CD14-positive monocyte (primary cell): ENCODE measurements at regions of chr15 and their contacts with region 1.

Region 1: DNA sequence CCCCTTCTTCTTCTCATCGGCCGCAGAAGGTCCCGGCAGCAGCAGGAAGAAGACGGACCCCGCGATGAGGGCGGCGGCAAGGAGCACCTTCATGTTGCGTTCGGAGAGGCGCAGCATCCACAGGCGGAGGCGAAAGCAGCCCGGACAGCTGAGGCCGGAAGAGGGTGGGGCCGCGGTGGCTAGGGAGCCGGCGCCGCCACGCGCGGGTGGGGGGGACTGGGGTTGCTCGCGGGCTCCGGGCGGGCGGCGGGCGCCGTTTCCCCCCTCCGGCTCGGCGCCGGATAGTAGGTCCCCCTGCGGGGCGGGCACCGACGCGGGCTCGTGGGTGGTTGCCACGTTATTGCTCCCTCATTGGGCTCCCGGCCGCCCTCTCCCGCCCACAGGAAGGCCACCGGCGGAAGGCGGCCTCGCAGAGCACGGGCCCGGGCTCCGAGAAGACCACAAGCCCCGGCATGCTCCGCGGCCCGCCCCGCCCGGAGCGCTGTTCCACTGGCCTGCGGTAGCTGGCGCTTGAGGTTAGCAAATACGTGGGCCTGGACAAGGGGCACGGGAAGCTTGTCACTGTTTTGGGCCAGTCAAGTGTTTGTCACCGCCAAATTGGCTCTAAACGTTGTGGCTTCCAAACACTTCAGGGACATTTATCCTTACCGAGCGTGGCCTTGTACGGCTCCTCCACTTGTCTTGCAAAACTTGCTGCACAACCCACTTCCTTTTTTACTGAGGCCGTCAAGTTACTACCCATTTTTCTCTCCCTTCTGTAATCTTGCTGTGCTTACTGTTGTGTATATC is at the start of gene PPIB:
- DNase-seq: peak; percentile 93 to 96 (median 95)
- H3K4me3 ChIP-seq: peak within 1 kb of the TSS; percentile 73 to 92 (median 85)
- H3K4me3 Mint-ChIP-seq: peak within 1 kb of the TSS; percentile 96
- H3K27ac ChIP-seq: peak within 1 kb of the TSS; percentile 89 to 94
- H3K27ac Mint-ChIP-seq: peak within 1 kb of the TSS; percentile 93 to 96 (median 95)
- H3K4me1 ChIP-seq: peaks cover 29 to 37% of the 10 kb centered on the region in 2 donors
- H3K4me1 Mint-ChIP-seq: peaks cover 41% of the 10 kb centered on the region
- H3K27me3 ChIP-seq: no peaks in the 10 kb centered on the region
- H3K27me3 Mint-ChIP-seq: peaks cover 0 to 2% (median 0%) of the 10 kb centered on the region in 3 donors
- CTCF ChIP-seq: no peak
- polyA plus RNA-seq, gene PPIB: 224 to 532 (median 520) TPM

Region 2: GRCh38 chr15:64093627-64094417 is 69.2 kb before region 1 on chr15 and contains the start of gene CIAO2A:
- intact Hi-C with region 1: loop called (anchors 2 to 5 kb)
- DNase-seq: peak; percentile 98 to 99 (median 99)
- H3K4me3 ChIP-seq: peak within 1 kb of the TSS; percentile 52 to 90 (median 84)
- H3K4me3 Mint-ChIP-seq: peak within 1 kb of the TSS; percentile 97 to 99
- H3K27ac ChIP-seq: peak within 1 kb of the TSS; percentile 87 to 95
- H3K27ac Mint-ChIP-seq: peak within 1 kb of the TSS; percentile 97 to 100 (median 99)
- H3K4me1 ChIP-seq: peaks cover 80 to 91% of the 10 kb centered on the region in 2 donors
- H3K4me1 Mint-ChIP-seq: peaks cover 71% of the 10 kb centered on the region
- H3K27me3 ChIP-seq: no peaks in the 10 kb centered on the region
- H3K27me3 Mint-ChIP-seq: no peaks in the 10 kb centered on the region
- CTCF ChIP-seq: no peak
- polyA plus RNA-seq, gene CIAO2A: 98.2 to 265 (median 261) TPM

Region 3: GRCh38 chr15:64112904-64113303 is 50.2 kb before region 1 on chr15:
- intact Hi-C with region 1: no loop called
- DNase-seq: peak; percentile 38 to 75 (median 55)
- H3K4me3 ChIP-seq: peak overlapping the region in 1 of 3 experiments; percentile 44
- H3K4me3 Mint-ChIP-seq: peak overlapping the region in 1 of 2 donors; percentile 75
- H3K27ac ChIP-seq: peak overlapping the region; percentile 62 to 90
- H3K27ac Mint-ChIP-seq: peak overlapping the region; percentile 81 to 94 (median 90)
- H3K4me1 ChIP-seq: peaks cover 38 to 45% of the 10 kb centered on the region in 2 donors
- H3K4me1 Mint-ChIP-seq: peaks cover 54% of the 10 kb centered on the region
- H3K27me3 ChIP-seq: no peaks in the 10 kb centered on the region
- H3K27me3 Mint-ChIP-seq: no peaks in the 10 kb centered on the region
- CTCF ChIP-seq: no peak

Region 4: DNA sequence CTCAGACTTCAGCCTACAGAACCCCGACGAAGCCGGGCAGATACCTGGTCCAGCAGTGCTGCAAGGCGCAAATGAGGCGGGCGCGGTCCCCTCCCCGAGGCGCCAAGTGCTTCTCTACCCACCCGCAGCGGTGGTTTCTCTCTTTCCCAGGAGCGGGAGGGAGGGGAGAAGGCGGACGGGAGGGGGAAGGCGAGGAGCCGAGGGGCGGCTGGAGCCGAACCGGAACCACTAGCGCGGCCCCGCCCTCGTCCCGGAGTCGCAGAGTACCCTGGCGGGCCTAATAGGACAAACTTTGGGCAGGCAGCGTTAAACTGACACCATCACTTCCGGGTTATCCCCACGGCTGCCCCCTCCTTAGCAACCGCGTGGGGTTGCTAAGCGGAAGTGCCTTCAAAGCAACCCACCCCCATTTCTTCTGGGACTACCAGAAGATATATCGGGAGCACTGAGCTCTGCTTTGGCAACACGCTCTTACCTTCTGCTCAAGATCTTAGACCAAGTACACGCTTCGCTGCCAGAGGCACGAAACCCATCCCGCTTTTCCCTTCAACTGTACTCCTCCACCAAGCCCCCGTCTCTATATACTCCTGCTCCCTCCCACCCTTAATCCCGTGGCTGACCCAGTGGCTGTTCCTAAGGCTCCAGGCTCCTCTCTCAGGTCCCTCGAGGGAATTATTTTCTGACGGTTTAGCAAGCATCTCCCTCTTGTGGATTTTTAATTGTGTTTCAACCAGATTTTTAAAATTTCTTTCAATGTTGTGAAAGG is 193.1 kb after region 1 on chr15 and contains the start of gene CSNK1G1:
- intact Hi-C with region 1: loop called in 1 of 2 experiments (anchors 10 kb)
- DNase-seq: peak; percentile 88 to 95 (median 92)
- H3K4me3 ChIP-seq: peak within 1 kb of the TSS; percentile 93 to 98 (median 95)
- H3K4me3 Mint-ChIP-seq: peak within 1 kb of the TSS; percentile 96 to 97
- H3K27ac ChIP-seq: peak within 1 kb of the TSS; percentile 34 to 78
- H3K27ac Mint-ChIP-seq: peak within 1 kb of the TSS; percentile 79 to 95 (median 90)
- H3K4me1 ChIP-seq: peaks cover 9 to 13% of the 10 kb centered on the region in 2 donors
- H3K4me1 Mint-ChIP-seq: peaks cover 13% of the 10 kb centered on the region
- H3K27me3 ChIP-seq: no peaks in the 10 kb centered on the region
- H3K27me3 Mint-ChIP-seq: no peaks in the 10 kb centered on the region
- CTCF ChIP-seq: peak; percentile 56
- polyA plus RNA-seq, gene CSNK1G1: 4.3 to 8.6 (median 7.7) TPM

Region 5: GRCh38 chr15:64387562-64388168 is 224.6 kb after region 1 on chr15 and contains the start of gene TRIP4:
- intact Hi-C with region 1: loop called in 1 of 2 experiments (anchors 5 kb)
- DNase-seq: peak; percentile 95 to 97 (median 97)
- H3K4me3 ChIP-seq: peak within 1 kb of the TSS; percentile 86 to 98 (median 92)
- H3K4me3 Mint-ChIP-seq: peak within 1 kb of the TSS; percentile 90 to 100
- H3K27ac ChIP-seq: peak within 1 kb of the TSS; percentile 54 to 93
- H3K27ac Mint-ChIP-seq: peak within 1 kb of the TSS; percentile 92 to 99 (median 96)
- H3K4me1 ChIP-seq: peaks cover 17 to 19% of the 10 kb centered on the region in 2 donors
- H3K4me1 Mint-ChIP-seq: peaks cover 12% of the 10 kb centered on the region
- H3K27me3 ChIP-seq: no peaks in the 10 kb centered on the region
- H3K27me3 Mint-ChIP-seq: peaks cover 0 to under 1% (median 0%) of the 10 kb centered on the region in 3 donors
- CTCF ChIP-seq: no peak
- polyA plus RNA-seq, gene TRIP4: 23.0 to 40.1 (median 35.6) TPM

Region 6: GRCh38 chr15:64460206-64460734 is 297.2 kb after region 1 on chr15 and contains the start of gene ZNF609:
- intact Hi-C with region 1: loop called in 1 of 2 experiments (anchors 5 kb)
- DNase-seq: peak; percentile 74 to 80 (median 79)
- H3K4me3 ChIP-seq: peak within 1 kb of the TSS; percentile 61 to 98 (median 83)
- H3K4me3 Mint-ChIP-seq: peak within 1 kb of the TSS; percentile 90 to 97
- H3K27ac ChIP-seq: peak within 1 kb of the TSS; percentile 12 to 72
- H3K27ac Mint-ChIP-seq: peak within 1 kb of the TSS; percentile 78 to 93 (median 87)
- H3K4me1 ChIP-seq: peaks cover 50 to 73% of the 10 kb centered on the region in 2 donors
- H3K4me1 Mint-ChIP-seq: peaks cover 79% of the 10 kb centered on the region
- H3K27me3 ChIP-seq: no peaks in the 10 kb centered on the region
- H3K27me3 Mint-ChIP-seq: no peaks in the 10 kb centered on the region
- CTCF ChIP-seq: no peak
- polyA plus RNA-seq, gene ZNF609: 1.3 to 13.2 (median 1.7) TPM